Breast epithelium (tissue), 4 donors: ENCODE measurements at regions of chr3 and their contacts with region 1.

Region 1: GRCh38 chr3:100089812-100090668 is 24.3 kb downstream of the FILIP1L start:
- DNase-seq: no peak
- H3K4me3 ChIP-seq: no peak overlapping the region
- H3K27ac ChIP-seq: peak overlapping the region in 1 of 2 donors; percentile 50
- H3K4me1 ChIP-seq: no peaks in the 10 kb centered on the region
- H3K27me3 ChIP-seq: no peaks in the 10 kb centered on the region
- CTCF ChIP-seq: peak in 1 of 3 donors; percentile 23
- POLR2A ChIP-seq: no peak

Region 2: GRCh38 chr3:100002599-100003350 is 87.3 kb before region 1 on chr3:
- intact Hi-C with region 1: loop called (anchors 10 kb)
- DNase-seq: peak in 1 of 2 donors; percentile 34
- H3K4me3 ChIP-seq: no peak overlapping the region
- H3K27ac ChIP-seq: peak overlapping the region; percentile 41 to 54
- H3K4me1 ChIP-seq: no peaks in the 10 kb centered on the region
- H3K27me3 ChIP-seq: no peaks in the 10 kb centered on the region
- CTCF ChIP-seq: no peak
- POLR2A ChIP-seq: no peak